ENCODE measurements at regions of chr20 and their contacts with region 1.

Region 1: DNA sequence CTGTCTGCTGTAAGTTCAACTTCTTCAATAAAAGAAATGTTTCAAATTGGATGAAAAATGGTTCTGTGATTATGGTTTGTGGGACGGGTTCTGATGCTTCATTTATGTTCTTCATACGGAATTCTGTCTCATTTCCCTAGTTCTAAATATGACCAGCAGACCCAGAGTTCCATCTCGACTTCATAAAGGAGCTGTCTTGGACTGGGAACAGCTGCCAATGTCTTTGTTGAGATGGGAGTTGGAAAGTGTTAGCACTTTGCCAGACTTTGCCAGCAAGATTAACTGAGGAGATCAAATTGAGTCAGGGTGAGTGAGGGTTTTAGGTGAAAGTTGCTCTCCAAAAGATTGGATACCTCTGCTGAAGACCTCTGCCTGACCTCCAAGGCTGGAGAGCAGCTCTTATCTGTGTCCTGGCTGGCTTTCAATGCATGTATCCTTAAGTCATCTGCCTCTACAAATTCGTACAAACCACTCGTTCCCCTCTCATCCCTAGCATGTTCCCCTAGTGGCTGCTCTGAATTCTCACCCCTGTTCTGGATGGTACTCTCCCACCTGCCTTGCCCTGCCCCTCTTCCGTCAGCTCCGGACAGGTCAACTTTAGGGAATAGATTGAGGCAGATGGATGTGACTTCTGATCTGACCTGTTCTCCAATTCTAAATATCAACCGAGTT is at the start of gene EFCAB8:
- DNase-seq: no peak
- ATAC-seq: no peak
- total RNA-seq, gene EFCAB8: 1.1 TPM

Region 2: GRCh38 chr20:32702706-32703425 is 156.0 kb before region 1 on chr20:
- intact Hi-C with region 1: no loop called
- DNase-seq: no peak
- ATAC-seq: no peak

Region 3: GRCh38 chr20:32828029-32828680 is 30.7 kb before region 1 on chr20:
- intact Hi-C with region 1: loop called (anchors 2 kb)
- DNase-seq: no peak
- ATAC-seq: no peak

Measured in sciatic nerve (tissue), 2 donors.